Mammary epithelial cell (primary cell): ENCODE measurements at regions of chr2 and their contacts with region 1.

Region 1: DNA sequence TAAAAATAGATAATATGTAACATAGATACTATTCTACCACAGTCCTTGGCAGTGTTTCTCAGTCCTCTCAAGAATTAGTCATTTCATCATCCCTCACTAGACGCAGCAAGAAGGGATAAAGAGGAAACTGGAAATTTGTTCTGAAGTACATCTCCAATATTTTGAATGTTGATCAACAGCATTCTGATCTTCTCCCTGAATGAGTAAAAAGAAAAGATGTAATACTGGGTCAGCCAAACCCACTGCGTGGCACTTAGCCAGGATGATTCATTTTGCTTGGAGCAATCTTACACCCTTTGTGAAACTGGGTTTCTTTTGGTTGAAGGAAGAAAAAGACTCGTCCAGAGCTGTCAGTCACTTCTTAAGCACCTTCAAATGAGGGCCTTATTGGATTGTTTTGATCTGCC is 54.1 kb downstream of the TAF1B start:
- DNase-seq: peak; percentile 99
- H3K4me3 ChIP-seq: peak overlapping the region in 1 of 3 experiments; percentile 2
- H3K27ac ChIP-seq: peak overlapping the region; percentile 97
- H3K4me1 ChIP-seq: peaks cover 36% of the 10 kb centered on the region
- H3K27me3 ChIP-seq: no peaks in the 10 kb centered on the region
- CTCF ChIP-seq: no peak

Region 2: DNA sequence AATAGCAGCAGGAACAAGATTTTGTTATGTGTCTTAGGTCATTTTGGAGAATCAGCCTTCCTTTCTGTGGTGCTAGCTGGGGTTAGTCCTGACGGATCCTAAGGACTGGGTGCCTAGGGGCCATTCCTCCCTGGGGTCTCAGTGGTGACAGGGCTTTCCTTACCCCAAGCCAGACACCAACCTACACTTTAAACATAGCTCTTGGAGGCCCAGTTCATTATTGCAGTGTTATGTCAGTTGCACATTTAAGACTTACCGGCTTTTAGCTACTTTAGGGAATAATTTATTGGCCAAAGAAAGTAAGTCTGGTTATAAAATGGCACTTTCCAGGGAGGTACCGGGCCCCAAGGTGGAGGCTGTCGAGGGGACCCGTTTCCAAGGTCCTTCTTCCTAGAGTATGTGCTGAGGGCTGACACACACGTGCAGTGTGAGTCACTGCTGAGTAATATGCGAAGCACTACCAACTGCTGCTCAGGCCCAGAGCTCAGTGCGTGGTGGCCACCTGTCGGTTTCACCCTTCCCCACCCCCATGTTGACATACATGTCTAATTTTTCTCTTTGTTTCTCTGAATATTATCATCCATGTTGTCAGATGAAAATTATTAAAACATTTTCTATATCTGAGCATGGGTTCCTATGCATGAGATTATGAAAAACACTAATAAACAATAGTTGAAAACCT is 17.2 kb after region 1 on chr2:
- CTCF ChIA-PET with region 1: no interaction called
- dilution Hi-C with region 1: no loop called
- in situ Hi-C with region 1: no loop called
- intact Hi-C with region 1: loop called (anchors 1 kb)
- DNase-seq: peak; percentile 82
- H3K4me3 ChIP-seq: no peak overlapping the region
- H3K27ac ChIP-seq: peak overlapping the region; percentile 15
- H3K4me1 ChIP-seq: peaks cover 8% of the 10 kb centered on the region
- H3K27me3 ChIP-seq: no peaks in the 10 kb centered on the region
- CTCF ChIP-seq: peak; percentile 27 to 71